Activated T-helper 1 cell treated with anti-CD3 and anti-CD28 coated beads, Interleukin-12 subunit alpha, Interleukin-12 subunit beta, Interleukin-2, Interleukin-4 antibody, amounts not matched to agents 30 ng/mL and 10 ng/mL and 1 ng/mL, durations not matched to agents 14 hours and 24 hours and 36 hours (primary cell): ENCODE measurements at regions of chr19 and their contacts with region 1.

Region 1: DNA sequence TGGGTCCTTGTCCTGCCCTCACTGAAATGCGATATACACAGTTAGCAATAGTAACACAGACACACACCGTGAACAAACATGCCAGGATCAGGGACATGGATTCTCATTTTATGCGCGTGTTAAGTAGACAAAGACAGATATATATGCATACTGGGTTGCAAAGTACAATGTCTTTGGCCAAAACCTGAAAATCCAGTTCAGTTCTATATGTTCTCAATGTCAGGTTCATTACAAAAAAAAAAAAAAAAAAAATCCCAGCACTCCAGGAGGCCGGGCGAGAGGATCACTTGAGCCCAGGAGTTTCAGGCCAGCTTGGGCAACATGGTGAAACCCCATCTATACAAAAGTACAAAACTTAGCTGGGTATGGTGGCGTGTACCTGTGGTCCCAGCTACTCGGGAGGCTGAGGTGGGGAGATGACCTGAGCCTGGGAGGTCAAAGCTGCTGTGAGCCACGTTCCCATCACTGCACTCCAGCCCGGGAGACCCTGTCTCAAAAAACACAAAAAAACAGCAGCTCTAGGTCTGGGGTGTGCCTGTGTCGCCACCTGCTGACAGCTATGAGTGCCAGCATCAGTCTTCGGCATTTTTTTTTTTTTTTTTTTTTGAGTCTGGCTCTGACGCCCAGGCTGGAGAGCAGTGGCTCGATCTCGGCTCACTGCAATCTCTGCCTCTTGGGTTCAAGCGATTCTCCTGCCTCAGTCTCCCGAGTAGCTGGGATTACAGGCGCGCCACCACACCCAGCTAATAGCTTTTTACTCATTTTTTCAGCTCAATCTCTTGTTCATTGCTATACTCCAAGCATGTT is 10.3 kb downstream of the AP2S1 start:
- DNase-seq: peak; percentile 32
- H3K4me3 Mint-ChIP-seq: no peak overlapping the region
- H3K27ac Mint-ChIP-seq: no peak overlapping the region
- H3K4me1 Mint-ChIP-seq: no peaks in the 10 kb centered on the region
- H3K27me3 Mint-ChIP-seq: no peaks in the 10 kb centered on the region

Region 2: GRCh38 chr19:46634045-46634655 is 206.2 kb before region 1 on chr19:
- intact Hi-C with region 1: no loop called
- DNase-seq: peak; percentile 94
- H3K4me3 Mint-ChIP-seq: peak overlapping the region; percentile 85
- H3K27ac Mint-ChIP-seq: peak overlapping the region; percentile 75
- H3K4me1 Mint-ChIP-seq: peaks cover 11% of the 10 kb centered on the region
- H3K27me3 Mint-ChIP-seq: peaks cover 2% of the 10 kb centered on the region

Region 3: DNA sequence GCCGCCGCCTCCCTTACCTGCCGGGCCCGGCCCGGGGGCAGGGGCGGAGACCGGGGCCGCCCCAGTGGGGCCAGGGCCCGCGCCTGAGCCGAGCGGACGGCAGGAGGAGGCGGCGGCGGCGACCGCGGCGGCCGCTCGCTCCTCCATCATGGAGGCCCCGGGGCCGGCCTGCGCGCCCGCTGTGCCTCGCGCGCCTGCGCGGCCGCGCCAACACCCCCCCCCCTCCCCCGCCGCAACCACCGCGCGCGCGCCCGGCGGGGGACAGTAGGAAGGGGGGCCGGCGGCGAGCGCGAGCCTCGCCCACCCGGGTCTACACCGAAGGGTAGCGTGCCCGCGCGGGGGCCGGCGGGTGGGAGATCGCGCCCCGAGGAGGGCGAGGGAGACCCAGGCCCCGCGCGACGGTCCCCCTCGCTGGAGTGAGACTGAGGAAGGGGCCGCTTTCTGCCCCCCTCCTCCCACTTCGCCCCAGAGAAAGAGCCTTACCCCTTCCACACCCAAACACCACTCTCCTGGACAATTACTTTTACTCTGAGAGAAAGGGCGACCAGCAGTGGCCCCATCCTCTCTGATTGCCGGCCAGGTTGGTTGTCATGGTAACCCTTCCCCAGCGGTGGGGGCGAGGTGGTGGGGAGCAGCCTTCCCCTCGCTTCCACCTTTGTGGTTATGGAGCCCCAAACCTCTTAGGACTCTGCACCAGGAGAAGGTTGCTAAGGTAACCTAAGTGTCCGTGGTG is 93.9 kb before region 1 on chr19 and contains the start of gene STRN4:
- intact Hi-C with region 1: loop called (anchors 1 kb)
- DNase-seq: peak; percentile 31
- H3K4me3 Mint-ChIP-seq: peak within 1 kb of the TSS; percentile 95
- H3K27ac Mint-ChIP-seq: peak within 1 kb of the TSS; percentile 91
- H3K4me1 Mint-ChIP-seq: peaks cover 46% of the 10 kb centered on the region
- H3K27me3 Mint-ChIP-seq: no peaks in the 10 kb centered on the region
- total RNA-seq, gene STRN4: 106 and 116 TPM in 2 replicates

Region 4: GRCh38 chr19:46753420-46754155 is 86.8 kb before region 1 on chr19:
- intact Hi-C with region 1: loop called (anchors 1 kb)
- DNase-seq: peak; percentile 56
- H3K4me3 Mint-ChIP-seq: no peak overlapping the region
- H3K27ac Mint-ChIP-seq: no peak overlapping the region
- H3K4me1 Mint-ChIP-seq: peaks cover 11% of the 10 kb centered on the region
- H3K27me3 Mint-ChIP-seq: no peaks in the 10 kb centered on the region

Region 5: GRCh38 chr19:46850228-46851203 is 10.2 kb after region 1 on chr19 and contains the start of gene AP2S1:
- intact Hi-C with region 1: loop called (anchors 1 kb)
- DNase-seq: peak; percentile 92
- H3K4me3 Mint-ChIP-seq: peak within 1 kb of the TSS; percentile 92
- H3K27ac Mint-ChIP-seq: peak within 1 kb of the TSS; percentile 86
- H3K4me1 Mint-ChIP-seq: peaks cover 24% of the 10 kb centered on the region
- H3K27me3 Mint-ChIP-seq: peaks cover 6% of the 10 kb centered on the region
- total RNA-seq, gene AP2S1: 96.4 and 98.1 TPM in 2 replicates

Region 6: GRCh38 chr19:46878613-46879375 is 38.5 kb after region 1 on chr19:
- intact Hi-C with region 1: no loop called
- DNase-seq: no peak
- H3K4me3 Mint-ChIP-seq: no peak overlapping the region
- H3K27ac Mint-ChIP-seq: no peak overlapping the region
- H3K4me1 Mint-ChIP-seq: no peaks in the 10 kb centered on the region
- H3K27me3 Mint-ChIP-seq: no peaks in the 10 kb centered on the region